Right cardiac atrium (tissue), 5 donors: ENCODE measurements at regions of chr14 and their contacts with region 1.

Region 1: DNA sequence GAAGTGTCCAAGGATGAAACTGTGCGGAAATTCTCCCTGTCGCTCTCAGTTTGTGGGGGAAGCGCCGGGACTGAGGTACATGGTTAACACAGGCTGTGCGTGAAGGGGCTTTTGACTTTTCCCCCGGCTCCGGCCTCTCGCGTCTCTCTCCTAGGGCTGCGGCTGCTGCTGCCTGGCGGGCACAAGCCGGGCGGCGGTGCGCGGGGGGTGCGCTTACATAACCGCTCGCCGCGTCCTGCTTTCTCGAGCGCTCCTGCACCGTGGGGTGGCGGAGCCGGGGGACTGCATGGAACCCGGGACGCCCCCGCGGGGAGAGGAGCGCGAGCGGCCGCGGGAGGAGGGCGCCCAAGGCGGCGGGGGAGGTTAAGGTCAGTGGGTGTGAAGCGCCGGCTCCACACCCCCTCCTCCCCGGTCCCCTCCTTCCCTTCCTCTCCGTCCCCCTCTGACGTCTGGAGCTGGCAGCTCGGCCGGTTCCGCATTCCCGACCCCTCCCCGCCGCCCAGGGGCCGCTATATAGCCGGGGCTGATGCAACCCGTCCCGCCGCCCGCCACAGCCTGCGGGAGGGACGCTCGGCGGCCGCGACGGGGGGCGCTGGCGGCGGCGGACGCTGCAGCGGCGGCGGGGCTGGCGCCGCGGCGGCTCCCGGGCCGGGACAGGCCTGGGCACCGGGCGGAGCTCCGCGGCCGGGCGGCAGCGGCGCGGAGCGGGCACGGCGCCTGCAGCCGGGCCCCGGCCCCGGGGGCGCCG is at the start of gene JDP2:
- DNase-seq: peak; percentile 97 to 99 (median 99)
- ATAC-seq: peak; percentile 93 to 94
- H3K4me3 ChIP-seq: peak within 1 kb of the TSS; percentile 95
- H3K27ac ChIP-seq: peak within 1 kb of the TSS; percentile 92
- H3K4me1 ChIP-seq: peaks cover 11% of the 10 kb centered on the region
- H3K27me3 ChIP-seq: no peaks in the 10 kb centered on the region
- total RNA-seq, gene JDP2: 28.3 to 42.2 (median 39.4) TPM

Region 2: GRCh38 chr14:75315144-75315543 is 112.5 kb before region 1 on chr14:
- intact Hi-C with region 1: loop called (anchors 5 to 10 kb)
- DNase-seq: no peak
- ATAC-seq: peak; percentile 41 to 44
- H3K4me3 ChIP-seq: no peak overlapping the region
- H3K27ac ChIP-seq: peak overlapping the region; percentile 70
- H3K4me1 ChIP-seq: peaks cover 9% of the 10 kb centered on the region
- H3K27me3 ChIP-seq: no peaks in the 10 kb centered on the region

Region 3: DNA sequence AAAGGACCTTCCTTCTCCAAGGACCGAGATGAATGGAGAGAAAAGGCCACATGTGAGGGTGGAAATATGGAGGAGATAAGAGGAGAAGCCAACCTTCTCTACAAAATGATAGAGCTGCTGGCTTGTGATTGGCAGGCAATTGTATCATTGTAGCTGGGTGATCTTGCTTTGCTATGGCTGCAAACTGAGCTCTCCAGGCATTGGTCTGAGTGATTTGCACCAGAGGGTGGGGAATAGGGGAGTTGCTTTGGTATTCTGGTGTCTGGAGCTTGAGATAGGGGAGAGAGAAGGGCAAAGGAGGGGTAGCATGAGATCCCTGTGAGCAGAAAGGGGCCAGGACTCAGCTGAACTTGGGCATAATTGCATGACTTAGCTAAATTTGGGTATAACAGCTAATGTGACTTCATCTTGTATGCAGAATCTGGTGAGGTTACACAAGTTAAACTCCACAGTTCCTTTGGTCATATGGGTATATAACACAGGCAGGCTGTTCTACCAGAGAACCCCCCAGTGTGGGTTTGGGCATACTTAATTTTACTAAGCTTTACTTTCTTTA is 77.1 kb before region 1 on chr14:
- intact Hi-C with region 1: no loop called
- DNase-seq: no peak
- ATAC-seq: no peak
- H3K4me3 ChIP-seq: no peak overlapping the region
- H3K27ac ChIP-seq: no peak overlapping the region
- H3K4me1 ChIP-seq: no peaks in the 10 kb centered on the region
- H3K27me3 ChIP-seq: no peaks in the 10 kb centered on the region